ENCODE measurements at regions of chrX and their contacts with region 1.

Region 1: GRCh38 chrX:4547213-4547836 is 833.9 kb upstream of the PRKX start:
- DNase-seq: peak; percentile 3
- H3K4me3 ChIP-seq: no peak overlapping the region
- H3K27ac ChIP-seq: no peak overlapping the region
- H3K4me1 ChIP-seq: no peaks in the 10 kb centered on the region
- H3K27me3 ChIP-seq: no peaks in the 10 kb centered on the region
- CTCF ChIP-seq: peak; percentile 45 to 55 (median 51)
- POLR2A ChIP-seq: no peak

Region 2: DNA sequence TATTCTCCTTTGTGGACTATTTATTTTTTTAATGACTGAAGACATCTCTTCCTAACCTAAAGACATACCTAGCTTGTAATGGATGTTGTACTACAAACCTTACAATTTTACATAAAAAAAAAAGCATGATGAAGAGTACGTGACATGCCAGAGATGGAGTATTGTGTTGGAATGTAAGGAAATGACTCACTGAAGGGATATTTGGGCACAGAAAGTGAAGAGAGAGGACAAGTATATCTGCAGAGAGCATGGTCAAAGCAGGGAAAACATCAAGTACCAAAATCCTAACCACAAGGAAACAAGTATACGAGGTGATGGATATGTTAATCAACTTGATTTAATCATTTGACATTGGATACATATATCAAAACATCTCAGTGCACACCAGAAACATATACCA is 217.6 kb after region 1 on chrX:
- intact Hi-C with region 1: no loop called
- DNase-seq: no peak
- H3K4me3 ChIP-seq: no peak overlapping the region
- H3K27ac ChIP-seq: no peak overlapping the region
- H3K4me1 ChIP-seq: no peaks in the 10 kb centered on the region
- H3K27me3 ChIP-seq: no peaks in the 10 kb centered on the region
- CTCF ChIP-seq: no peak
- POLR2A ChIP-seq: no peak

Region 3: DNA sequence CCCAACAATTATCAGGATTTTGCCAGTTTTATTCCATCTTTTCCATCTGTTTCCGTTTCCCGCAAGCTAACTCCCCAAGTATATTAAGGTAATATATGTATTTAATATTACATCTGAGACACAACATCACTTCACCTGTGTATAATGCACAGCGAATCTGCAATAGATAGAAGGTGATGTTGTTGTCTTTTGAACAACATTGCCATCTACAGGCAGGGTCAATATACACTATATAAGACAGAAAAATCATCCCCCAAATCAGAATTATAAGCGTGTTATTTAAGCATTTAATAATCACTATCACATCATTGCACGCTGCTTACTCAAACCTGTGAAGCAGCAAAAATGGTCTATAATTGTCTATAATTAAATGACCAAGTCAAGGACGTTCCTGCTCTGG is 565.8 kb after region 1 on chrX:
- intact Hi-C with region 1: loop called (anchors 5 kb)
- DNase-seq: no peak
- H3K4me3 ChIP-seq: no peak overlapping the region
- H3K27ac ChIP-seq: no peak overlapping the region
- H3K4me1 ChIP-seq: no peaks in the 10 kb centered on the region
- H3K27me3 ChIP-seq: no peaks in the 10 kb centered on the region
- CTCF ChIP-seq: no peak
- POLR2A ChIP-seq: no peak

Measured in prostate gland (tissue), 2 donors.